PC-3 (cell line): ENCODE measurements at regions of chr2 and their contacts with region 1.

Region 1: DNA sequence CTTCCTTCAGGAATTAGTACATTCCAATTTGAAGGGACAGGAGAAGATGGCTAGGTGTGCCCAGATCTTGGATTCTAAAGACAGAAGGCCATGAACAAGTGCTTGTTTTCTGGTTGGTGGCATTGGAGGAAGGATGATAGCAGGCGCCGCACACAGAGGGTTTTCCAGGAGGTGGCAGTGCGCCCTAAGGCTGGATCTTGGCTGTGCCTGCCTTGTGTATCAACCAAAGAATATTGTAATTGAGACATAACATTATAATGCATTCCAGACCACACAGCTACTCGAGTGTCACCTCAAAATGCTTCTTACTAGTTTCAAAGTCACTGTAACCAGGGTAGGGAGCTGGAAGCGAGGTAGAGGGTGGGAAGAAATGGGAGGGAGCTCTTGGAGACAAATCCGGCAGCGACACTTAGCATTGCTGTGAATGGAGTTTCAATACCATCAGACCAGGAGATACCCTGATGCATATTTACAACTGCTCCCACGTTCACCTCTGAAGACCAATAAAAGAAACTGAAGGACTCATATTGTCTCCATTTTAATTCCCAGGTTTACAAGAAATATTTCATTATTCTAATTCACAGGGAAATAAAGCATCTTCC is 42.5 kb downstream of the CPO start:
- DNase-seq: peak; percentile 82
- ATAC-seq: peak; percentile 82
- H3K4me3 ChIP-seq: no peak overlapping the region
- H3K27ac ChIP-seq: no peak overlapping the region
- H3K4me1 ChIP-seq: peaks cover 30% of the 10 kb centered on the region
- H3K27me3 ChIP-seq: no peaks in the 10 kb centered on the region
- CTCF ChIP-seq: peak; percentile 93

Region 2: DNA sequence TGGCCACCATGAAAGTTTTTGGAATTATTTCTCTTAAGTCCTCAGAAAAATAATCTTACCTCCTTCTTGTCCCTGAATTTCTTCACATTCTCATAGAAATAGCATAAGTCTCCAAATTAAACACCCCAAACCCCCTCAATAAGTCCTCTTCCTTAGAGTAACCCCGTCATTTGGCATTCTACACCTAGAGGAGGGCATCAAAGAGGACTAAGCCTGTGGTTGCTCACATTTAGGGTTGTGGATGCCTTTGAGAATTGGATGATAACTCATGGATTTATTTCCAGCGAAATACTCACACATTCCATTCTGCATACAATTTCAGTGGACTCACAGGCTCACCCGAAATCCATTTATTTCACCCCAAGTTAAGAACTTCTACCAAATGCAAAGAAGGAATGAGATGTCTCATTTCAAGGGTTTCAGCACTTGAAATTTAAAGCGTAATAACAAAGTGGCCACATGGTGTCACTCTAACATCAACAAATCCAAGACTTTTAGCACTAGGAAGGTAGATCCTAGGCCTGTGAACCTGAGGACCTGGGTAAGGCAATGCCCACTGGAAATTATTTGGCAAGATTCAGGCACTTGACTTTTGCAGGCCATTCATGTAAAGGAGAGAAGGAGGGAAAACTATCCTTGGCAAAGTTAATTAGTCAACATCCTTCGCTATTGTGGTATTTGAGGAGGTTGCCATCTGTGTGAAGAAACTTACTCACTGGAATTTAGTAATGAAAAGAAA is 288.3 kb before region 1 on chr2:
- CTCF ChIA-PET with region 1: no interaction called
- POLR2A ChIA-PET with region 1: no interaction called
- intact Hi-C with region 1: loop called (anchors 10 kb)
- DNase-seq: peak; percentile 82
- ATAC-seq: peak; percentile 82
- H3K4me3 ChIP-seq: no peak overlapping the region
- H3K27ac ChIP-seq: no peak overlapping the region
- H3K4me1 ChIP-seq: no peaks in the 10 kb centered on the region
- H3K27me3 ChIP-seq: no peaks in the 10 kb centered on the region
- CTCF ChIP-seq: peak; percentile 84

Region 3: GRCh38 chr2:206858972-206859739 is 122.7 kb before region 1 on chr2:
- CTCF ChIA-PET with region 1: no interaction called
- POLR2A ChIA-PET with region 1: no interaction called
- intact Hi-C with region 1: no loop called
- DNase-seq: no peak
- ATAC-seq: no peak
- H3K4me3 ChIP-seq: no peak overlapping the region
- H3K27ac ChIP-seq: no peak overlapping the region
- H3K4me1 ChIP-seq: no peaks in the 10 kb centered on the region
- H3K27me3 ChIP-seq: no peaks in the 10 kb centered on the region
- CTCF ChIP-seq: no peak

Region 4: GRCh38 chr2:207188626-207189419 is 207.0 kb after region 1 on chr2:
- CTCF ChIA-PET with region 1: no interaction called
- POLR2A ChIA-PET with region 1: interaction called, 4 read pairs
- intact Hi-C with region 1: loop called (anchors 5 kb)
- DNase-seq: peak; percentile 80
- ATAC-seq: peak; percentile 96
- H3K4me3 ChIP-seq: no peak overlapping the region
- H3K27ac ChIP-seq: no peak overlapping the region
- H3K4me1 ChIP-seq: peaks cover 27% of the 10 kb centered on the region
- H3K27me3 ChIP-seq: no peaks in the 10 kb centered on the region
- CTCF ChIP-seq: no peak

Region 5: DNA sequence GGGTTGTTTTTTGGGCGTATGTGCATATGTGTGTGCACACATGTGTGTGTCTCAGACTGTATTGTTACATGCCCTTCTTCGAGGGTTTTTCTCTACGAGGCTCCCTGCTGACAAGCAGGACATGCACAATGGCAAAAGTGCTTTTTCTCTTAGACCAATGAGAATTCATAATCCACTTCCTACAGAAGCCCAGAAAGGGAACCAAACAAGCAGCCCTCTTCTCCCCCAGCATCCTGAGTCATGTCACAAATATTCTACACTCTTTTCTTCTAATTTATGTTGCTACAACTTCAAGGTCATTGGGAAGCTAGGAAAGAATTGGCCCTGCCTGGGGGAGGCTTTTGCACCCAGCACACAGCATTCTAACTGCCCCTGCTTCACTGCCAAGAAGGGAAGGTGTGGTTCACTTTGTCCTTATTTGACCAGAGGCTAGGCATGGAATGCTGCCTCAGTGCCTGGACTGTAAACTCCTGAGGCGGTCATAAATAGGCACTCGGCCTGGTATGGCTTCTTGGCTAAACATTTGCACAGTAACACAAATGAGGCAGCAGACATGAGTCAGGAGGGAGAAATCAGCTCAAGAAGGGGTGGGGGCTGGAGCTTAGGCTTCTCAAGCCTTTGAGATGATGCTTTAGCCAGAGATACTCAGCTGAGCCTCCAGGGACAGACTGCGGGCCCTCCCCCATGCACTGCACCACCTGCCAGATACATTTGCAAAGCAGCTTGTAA is 276.6 kb after region 1 on chr2:
- CTCF ChIA-PET with region 1: no interaction called
- POLR2A ChIA-PET with region 1: no interaction called
- intact Hi-C with region 1: loop called (anchors 5 kb)
- DNase-seq: peak; percentile 96
- ATAC-seq: peak; percentile 76
- H3K4me3 ChIP-seq: no peak overlapping the region
- H3K27ac ChIP-seq: peak overlapping the region; percentile 55
- H3K4me1 ChIP-seq: peaks cover 82% of the 10 kb centered on the region
- H3K27me3 ChIP-seq: no peaks in the 10 kb centered on the region
- CTCF ChIP-seq: no peak

Region 6: DNA sequence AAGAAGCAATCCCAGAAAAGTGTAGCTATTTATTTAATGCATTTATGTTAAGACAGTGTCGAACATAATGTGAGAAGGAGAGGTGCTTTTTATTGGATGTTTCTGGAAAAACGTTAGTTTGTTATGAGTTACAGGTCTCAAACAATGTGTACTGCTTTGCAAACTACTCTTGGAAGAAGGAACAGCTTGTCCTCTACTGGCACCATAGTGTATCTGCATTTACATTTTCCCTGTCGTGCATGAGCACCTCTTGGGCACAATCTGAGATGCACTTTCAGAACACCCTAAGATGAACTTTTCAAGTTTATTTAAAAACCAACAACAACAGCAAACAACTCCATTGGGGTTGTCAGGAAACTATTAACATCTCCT is 752.4 kb after region 1 on chr2:
- CTCF ChIA-PET with region 1: no interaction called
- POLR2A ChIA-PET with region 1: no interaction called
- intact Hi-C with region 1: loop called (anchors 2 kb)
- DNase-seq: peak; percentile 70
- ATAC-seq: peak; percentile 95
- H3K4me3 ChIP-seq: no peak overlapping the region
- H3K27ac ChIP-seq: no peak overlapping the region
- H3K4me1 ChIP-seq: no peaks in the 10 kb centered on the region
- H3K27me3 ChIP-seq: no peaks in the 10 kb centered on the region
- CTCF ChIP-seq: peak; percentile 76